ENCODE measurements at regions of chr5 and their contacts with region 1.

Region 1: GRCh38 chr5:173753307-173754168 is 134.6 kb upstream of the CPEB4 start:
- DNase-seq: peak; percentile 84 to 95
- ATAC-seq: peak; percentile 94 to 96 (median 95)
- H3K4me3 ChIP-seq: peak overlapping the region; percentile 41
- H3K27ac ChIP-seq: peak overlapping the region; percentile 92
- H3K4me1 ChIP-seq: peaks cover 34% of the 10 kb centered on the region
- H3K27me3 ChIP-seq: no peaks in the 10 kb centered on the region
- CTCF ChIP-seq: no peak

Region 2: DNA sequence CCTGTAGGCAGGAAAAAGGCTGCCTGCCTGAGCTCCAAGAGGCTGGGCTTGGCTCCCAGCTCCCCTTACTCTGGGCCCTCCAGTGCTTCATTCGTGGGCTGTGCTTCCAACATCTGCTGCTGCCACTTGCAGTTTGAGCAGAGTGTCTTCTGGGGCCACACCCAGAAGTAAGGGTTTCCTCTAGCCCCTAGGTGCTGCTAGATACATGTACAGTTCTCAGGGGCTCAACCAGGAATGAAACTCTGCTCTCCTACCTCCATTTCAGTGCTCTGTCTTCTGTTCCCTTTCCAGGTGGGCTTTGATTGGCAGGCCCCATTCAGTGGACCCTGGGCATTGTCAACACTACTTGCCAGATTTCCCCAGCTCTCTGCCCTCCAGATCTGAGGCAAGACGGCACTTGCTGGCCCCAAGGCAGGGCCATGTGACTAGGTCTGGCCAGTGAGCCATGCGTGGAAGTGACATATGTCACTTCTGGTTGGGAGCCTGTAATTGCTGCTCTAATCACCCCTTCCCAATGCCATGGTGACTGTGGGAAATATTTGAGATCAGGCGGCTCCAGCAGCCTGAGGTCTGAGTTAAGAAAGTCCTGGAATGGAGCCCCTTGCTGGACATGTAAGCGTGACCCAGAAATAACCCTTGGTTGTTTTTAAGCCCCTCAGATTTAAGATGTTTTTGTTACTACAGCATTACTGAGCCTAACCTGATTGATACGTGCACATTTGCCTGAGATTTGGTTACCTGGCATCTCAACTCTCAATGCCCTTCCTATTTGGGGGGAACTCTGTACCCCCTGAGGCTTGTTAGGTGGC is 127.6 kb before region 1 on chr5:
- intact Hi-C with region 1: loop called in 1 of 2 experiments (anchors 5 kb)
- DNase-seq: no peak
- ATAC-seq: peak; percentile 68 to 81 (median 79)
- H3K4me3 ChIP-seq: no peak overlapping the region
- H3K27ac ChIP-seq: peak overlapping the region; percentile 19
- H3K4me1 ChIP-seq: peaks cover 19% of the 10 kb centered on the region
- H3K27me3 ChIP-seq: no peaks in the 10 kb centered on the region
- CTCF ChIP-seq: no peak

Region 3: DNA sequence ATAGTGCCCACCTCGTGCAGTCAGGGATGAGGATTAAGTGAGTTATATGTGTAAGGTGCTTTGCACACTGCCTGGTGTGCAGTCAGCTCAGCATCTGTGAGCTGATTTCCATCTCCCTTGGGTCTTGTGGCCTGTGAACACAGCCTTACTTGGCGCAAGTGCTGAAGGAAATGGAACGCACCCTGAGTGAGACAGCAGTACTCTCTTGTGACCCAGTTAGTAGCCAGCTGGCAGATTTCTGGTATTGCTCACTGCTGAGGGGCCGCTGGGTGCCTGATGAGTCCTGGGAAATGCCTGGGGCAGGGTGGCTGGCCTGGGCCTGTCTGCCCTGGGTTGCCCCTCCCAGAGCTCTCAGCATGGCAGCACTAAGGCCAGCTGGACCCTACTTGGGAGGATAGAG is 46.1 kb before region 1 on chr5:
- intact Hi-C with region 1: loop called (anchors 5 kb)
- DNase-seq: peak; percentile 81 to 92
- ATAC-seq: peak; percentile 95 to 98 (median 96)
- H3K4me3 ChIP-seq: no peak overlapping the region
- H3K27ac ChIP-seq: peak overlapping the region; percentile 82
- H3K4me1 ChIP-seq: peaks cover 20% of the 10 kb centered on the region
- H3K27me3 ChIP-seq: no peaks in the 10 kb centered on the region
- CTCF ChIP-seq: no peak

Measured in psoas muscle (tissue), 8 donors.